Posterior cingulate gyrus (tissue), 11 donors: ENCODE measurements at regions of chrX and their contacts with region 1.

Region 1: GRCh38 chrX:49269010-49269767 is 404 bp upstream of the PPP1R3F start:
- DNase-seq: peak; percentile 92 to 99 (median 94)

Region 2: GRCh38 chrX:49192722-49193328 is 76.4 kb before region 1 on chrX:
- intact Hi-C with region 1: loop called (anchors 2 kb)
- DNase-seq: peak in 2 of 10 donors; percentile 70 to 83